ENCODE measurements at regions of chr16 and their contacts with region 1.

Region 1: GRCh38 chr16:23987443-23987842 is 151.7 kb downstream of the PRKCB start:
- DNase-seq: no peak
- ATAC-seq: peak; percentile 97
- H3K4me3 Mint-ChIP-seq: peak overlapping the region; percentile 46
- H3K27ac Mint-ChIP-seq: peak overlapping the region; percentile 78
- H3K4me1 Mint-ChIP-seq: peaks cover 52% of the 10 kb centered on the region
- H3K27me3 Mint-ChIP-seq: no peaks in the 10 kb centered on the region
- CTCF ChIP-seq: no peak

Region 2: GRCh38 chr16:23663918-23664317 is 323.5 kb before region 1 on chr16:
- CTCF ChIA-PET with region 1: no interaction called
- POLR2A ChIA-PET with region 1: no interaction called
- intact Hi-C with region 1: no loop called
- DNase-seq: no peak
- ATAC-seq: no peak
- H3K4me3 Mint-ChIP-seq: no peak overlapping the region
- H3K27ac Mint-ChIP-seq: no peak overlapping the region
- H3K4me1 Mint-ChIP-seq: peaks cover under 1% of the 10 kb centered on the region
- H3K27me3 Mint-ChIP-seq: no peaks in the 10 kb centered on the region
- CTCF ChIP-seq: no peak

Region 3: GRCh38 chr16:23712976-23713375 is 274.5 kb before region 1 on chr16 and contains the start of gene ERN2:
- CTCF ChIA-PET with region 1: no interaction called
- POLR2A ChIA-PET with region 1: no interaction called
- intact Hi-C with region 1: no loop called
- DNase-seq: no peak
- ATAC-seq: no peak
- H3K4me3 Mint-ChIP-seq: no peak within 1 kb of the TSS
- H3K27ac Mint-ChIP-seq: no peak within 1 kb of the TSS
- H3K4me1 Mint-ChIP-seq: no peaks in the 10 kb centered on the region
- H3K27me3 Mint-ChIP-seq: peaks cover 49% of the 10 kb centered on the region
- CTCF ChIP-seq: no peak
- total RNA-seq, gene ERN2: not detected in 2 replicates

Region 4: DNA sequence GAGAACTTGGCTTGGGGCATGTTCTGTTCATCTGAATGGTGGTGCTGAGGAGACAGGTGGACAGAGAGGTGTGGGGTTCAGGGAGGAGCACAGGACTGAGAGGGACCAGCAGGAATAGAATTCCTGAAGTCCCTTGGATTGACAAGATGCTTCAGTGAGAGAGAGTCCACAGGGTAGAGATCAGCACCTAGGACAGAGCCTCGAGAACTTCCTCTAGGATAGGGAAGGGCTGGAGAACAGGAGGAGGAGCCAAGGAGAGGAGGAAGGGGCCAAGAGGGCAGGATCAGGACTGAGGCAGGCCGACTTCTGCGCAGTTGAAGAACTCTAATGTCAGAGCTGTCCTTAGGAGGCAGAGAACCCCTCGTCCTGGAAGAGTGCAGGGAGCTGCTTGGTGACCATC is 13.2 kb before region 1 on chr16:
- CTCF ChIA-PET with region 1: no interaction called
- POLR2A ChIA-PET with region 1: interaction called, 10 read pairs
- intact Hi-C with region 1: no loop called
- DNase-seq: no peak
- ATAC-seq: no peak
- H3K4me3 Mint-ChIP-seq: no peak overlapping the region
- H3K27ac Mint-ChIP-seq: peak overlapping the region; percentile 13
- H3K4me1 Mint-ChIP-seq: peaks cover 84% of the 10 kb centered on the region
- H3K27me3 Mint-ChIP-seq: no peaks in the 10 kb centered on the region
- CTCF ChIP-seq: no peak